Motor neuron (in vitro differentiated cells): ENCODE measurements at regions of chr9 and their contacts with region 1.

Region 1: DNA sequence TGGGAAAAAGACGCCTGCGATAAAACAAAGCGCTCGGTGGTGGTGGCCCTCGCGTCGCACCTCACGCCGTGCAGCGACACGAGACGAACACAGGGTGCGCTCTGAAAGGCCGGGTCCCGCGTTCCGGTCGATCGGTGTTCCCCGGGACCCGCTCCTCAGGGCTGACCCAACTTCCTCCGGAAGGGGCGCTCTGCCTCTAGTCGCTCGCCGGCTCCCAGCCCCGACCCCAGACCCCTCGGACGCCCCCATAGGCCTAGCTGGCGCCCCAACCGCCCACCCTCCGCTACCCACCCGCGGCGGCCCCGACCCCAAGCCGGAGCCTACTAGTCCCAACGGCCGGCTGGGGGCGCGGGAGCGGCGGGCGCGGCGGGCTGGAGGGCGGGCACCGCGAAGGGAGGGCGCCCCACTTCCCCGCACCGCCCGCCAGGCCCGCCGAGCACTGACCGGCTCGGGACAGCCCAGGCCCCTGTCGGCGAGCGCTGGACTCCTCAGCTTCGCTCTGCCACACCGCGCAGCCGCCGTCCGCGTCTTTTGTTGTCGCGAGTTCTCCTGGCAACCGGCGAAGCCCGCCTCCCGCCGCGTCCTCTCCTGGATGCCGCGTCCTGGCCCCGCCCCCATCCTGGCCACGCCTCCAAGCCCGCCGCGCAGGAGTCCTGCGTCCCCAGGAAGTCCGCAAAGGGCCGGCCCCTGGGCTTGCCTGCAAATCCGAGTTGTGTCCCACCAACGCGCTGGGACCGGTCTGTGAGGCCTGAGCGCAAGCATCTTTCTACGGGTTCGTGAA is at the start of gene KIF27:
- ATAC-seq: peak; percentile 90 to 96 (median 94)
- H3K4me3 ChIP-seq: peak within 1 kb of the TSS; percentile 69 to 94 (median 89)
- H3K27ac ChIP-seq: peak within 1 kb of the TSS; percentile 90 to 95
- H3K4me1 ChIP-seq: peaks cover 0 to 3% of the 10 kb centered on the region in 2 donors
- total RNA-seq, gene KIF27: 3.3 to 18.6 (median 8.8) TPM

Region 2: GRCh38 chr9:83034587-83034986 is 886.5 kb before region 1 on chr9:
- in situ Hi-C with region 1: no loop called
- ATAC-seq: peak in 3 of 8 experiments; percentile 23 to 64 (median 56)
- H3K4me3 ChIP-seq: no peak overlapping the region
- H3K27ac ChIP-seq: no peak overlapping the region
- H3K4me1 ChIP-seq: no peaks in the 10 kb centered on the region

Region 3: DNA sequence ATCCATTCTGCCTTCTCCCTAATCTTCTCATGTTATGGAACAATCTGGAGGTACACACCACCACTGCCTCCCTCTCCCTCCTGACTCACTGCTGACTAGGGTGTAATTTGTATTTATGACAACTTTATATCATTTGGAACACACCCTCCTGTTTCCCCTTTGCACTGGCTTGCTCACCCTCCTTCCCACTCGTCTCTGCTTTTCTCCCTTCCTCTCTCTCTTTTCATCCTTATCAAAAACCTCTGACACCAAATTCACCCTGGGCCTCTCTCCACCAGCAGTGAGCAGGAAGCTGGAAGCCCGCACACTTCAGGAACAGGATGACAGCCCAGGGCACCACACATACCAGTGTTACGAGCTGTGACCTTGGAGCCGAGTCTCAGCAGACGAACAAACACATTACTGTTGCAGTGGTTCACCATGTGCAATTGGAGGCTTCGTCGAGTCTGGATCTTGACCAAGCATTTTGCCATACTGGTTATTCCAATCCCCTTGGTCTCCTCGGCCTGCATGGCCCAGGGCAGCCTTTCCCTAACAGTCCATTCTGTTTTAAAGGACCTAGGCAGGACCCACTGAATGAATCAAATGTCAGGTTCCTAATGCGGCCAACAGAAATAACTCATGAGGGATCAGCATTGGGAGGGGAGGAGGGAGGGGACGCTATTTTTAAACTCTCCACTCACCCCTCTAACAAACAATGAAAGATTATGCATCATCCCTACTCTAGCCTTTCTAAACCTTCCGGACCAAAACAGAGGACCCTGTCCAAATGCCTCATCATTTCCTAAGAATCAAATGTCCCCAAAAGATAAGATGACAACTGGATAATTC is 654.2 kb before region 1 on chr9:
- in situ Hi-C with region 1: no loop called
- ATAC-seq: peak; percentile 47 to 95 (median 77)
- H3K4me3 ChIP-seq: no peak overlapping the region
- H3K27ac ChIP-seq: peak overlapping the region in 1 of 2 donors; percentile 41
- H3K4me1 ChIP-seq: peaks cover 0 to 9% of the 10 kb centered on the region in 2 donors

Region 4: DNA sequence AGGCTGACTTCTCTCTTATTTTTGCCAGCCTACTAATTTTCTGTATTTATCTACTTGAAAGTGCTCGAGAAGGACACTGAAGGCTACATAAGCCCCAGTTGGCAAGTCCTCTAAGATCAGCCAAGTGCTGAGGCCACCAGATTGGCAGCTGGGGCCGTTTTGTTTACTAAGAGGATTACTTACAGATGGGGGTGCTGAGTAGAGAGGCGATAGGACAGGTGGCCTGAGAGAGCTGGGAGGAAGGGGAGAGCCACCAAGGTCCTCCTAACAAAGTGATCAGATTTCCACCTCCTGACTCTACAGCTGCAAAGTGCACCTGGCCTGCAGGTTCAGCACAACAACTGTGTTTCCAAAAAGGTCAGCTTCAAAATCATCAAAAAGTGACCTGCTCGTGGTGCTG is 415.8 kb before region 1 on chr9:
- in situ Hi-C with region 1: no loop called
- ATAC-seq: no peak
- H3K4me3 ChIP-seq: no peak overlapping the region
- H3K27ac ChIP-seq: no peak overlapping the region
- H3K4me1 ChIP-seq: peaks cover 0 to 2% of the 10 kb centered on the region in 2 donors

Region 5: DNA sequence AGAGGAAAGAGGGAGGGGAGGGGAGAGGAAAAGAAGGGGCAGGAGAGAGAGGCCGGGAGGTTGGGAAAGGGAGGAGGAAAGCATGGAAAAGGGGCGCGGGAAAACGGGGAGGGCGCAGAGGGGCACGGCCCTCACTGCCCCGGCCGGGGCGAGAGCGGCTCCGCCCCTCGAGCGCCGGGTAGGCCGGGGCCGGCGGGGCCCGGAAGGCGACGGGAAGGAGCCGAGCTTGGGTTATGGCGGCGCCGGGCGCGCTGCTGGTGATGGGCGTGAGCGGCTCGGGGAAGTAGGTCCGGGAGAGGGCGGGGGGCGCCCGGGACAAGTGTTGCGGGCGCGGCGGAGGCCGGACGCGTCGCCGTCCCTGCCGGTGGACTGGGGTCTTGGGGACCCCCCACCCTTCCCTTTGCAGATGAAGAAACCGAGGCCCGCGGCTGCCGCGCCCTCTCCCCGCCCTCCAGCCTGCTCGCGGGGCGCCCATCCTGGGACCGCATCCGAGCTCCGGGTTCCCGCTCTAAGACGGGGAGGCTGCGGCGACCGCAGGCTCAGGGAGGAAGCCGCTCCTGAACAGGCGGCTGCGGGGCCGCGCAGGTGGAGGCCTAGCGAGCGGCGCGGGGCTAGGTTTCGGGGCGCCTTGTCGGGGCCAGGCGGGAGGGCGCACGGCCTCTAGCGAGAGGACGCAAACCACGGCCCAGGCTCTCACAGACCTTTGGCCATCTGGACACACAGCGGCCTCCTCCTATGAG is 298.0 kb before region 1 on chr9 and contains the start of gene IDNK:
- in situ Hi-C with region 1: loop called in 1 of 9 experiments (anchors 25 kb)
- ATAC-seq: peak; percentile 84 to 92 (median 86)
- H3K4me3 ChIP-seq: peak within 1 kb of the TSS; percentile 37 to 58 (median 48)
- H3K27ac ChIP-seq: peak within 1 kb of the TSS; percentile 49 to 82
- H3K4me1 ChIP-seq: peaks cover 5 to 11% of the 10 kb centered on the region in 2 donors
- total RNA-seq, gene IDNK: 2.1 to 6.6 (median 3.7) TPM

Region 6: GRCh38 chr9:83707768-83708514 is 213.2 kb before region 1 on chr9 and contains the start of gene UBQLN1:
- in situ Hi-C with region 1: loop called in 1 of 9 experiments (anchors 25 kb)
- ATAC-seq: peak; percentile 77 to 91 (median 87)
- H3K4me3 ChIP-seq: peak within 1 kb of the TSS; percentile 75 to 98 (median 77)
- H3K27ac ChIP-seq: peak within 1 kb of the TSS; percentile 99 to 100
- H3K4me1 ChIP-seq: peaks cover 0 to 15% of the 10 kb centered on the region in 2 donors
- total RNA-seq, gene UBQLN1: 85.2 to 124 (median 104) TPM

Region 7: DNA sequence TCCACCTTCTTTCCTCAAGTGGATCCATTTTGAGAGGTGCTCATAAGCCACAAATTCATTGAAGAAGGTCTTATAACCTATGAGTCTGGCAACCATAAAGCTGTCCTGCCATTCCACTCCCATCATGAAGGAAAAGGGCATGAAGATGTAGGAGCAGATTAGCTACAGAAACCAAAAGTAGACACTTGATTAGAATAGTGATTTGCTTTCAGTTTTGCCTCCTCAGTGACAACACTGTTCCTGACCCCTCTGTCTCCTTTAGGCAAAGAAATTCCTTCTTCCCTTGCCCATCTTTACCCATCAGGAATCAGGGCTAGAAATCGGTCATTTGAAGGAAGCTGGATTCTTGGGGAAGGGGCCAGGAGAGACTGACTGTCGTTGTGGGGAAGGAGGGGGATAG is 364.3 kb after region 1 on chr9:
- in situ Hi-C with region 1: no loop called
- ATAC-seq: peak in 1 of 8 experiments; percentile 45
- H3K4me3 ChIP-seq: no peak overlapping the region
- H3K27ac ChIP-seq: no peak overlapping the region
- H3K4me1 ChIP-seq: peaks cover 17 to 18% of the 10 kb centered on the region in 2 donors